ENCODE measurements at regions of chr4 and their contacts with region 1.

Region 1: GRCh38 chr4:112381996-112382692 is 85.0 kb downstream of the ALPK1 start:
- DNase-seq: no peak
- H3K4me3 ChIP-seq: no peak overlapping the region
- H3K27ac ChIP-seq: no peak overlapping the region
- H3K4me1 ChIP-seq: no peaks in the 10 kb centered on the region
- H3K27me3 ChIP-seq: no peaks in the 10 kb centered on the region
- CTCF ChIP-seq: no peak
- EP300 ChIP-seq: no peak
- POLR2A ChIP-seq: no peak

Region 2: GRCh38 chr4:112266821-112267220 is 115.3 kb before region 1 on chr4:
- in situ Hi-C with region 1: no loop called
- intact Hi-C with region 1: no loop called
- DNase-seq: no peak
- H3K4me3 ChIP-seq: no peak overlapping the region
- H3K27ac ChIP-seq: no peak overlapping the region
- H3K4me1 ChIP-seq: no peaks in the 10 kb centered on the region
- H3K27me3 ChIP-seq: no peaks in the 10 kb centered on the region
- CTCF ChIP-seq: peak in 4 of 5 experiments; percentile 26 to 38 (median 33)
- EP300 ChIP-seq: no peak
- POLR2A ChIP-seq: no peak

Region 3: GRCh38 chr4:112343330-112344080 is 38.6 kb before region 1 on chr4:
- in situ Hi-C with region 1: no loop called
- intact Hi-C with region 1: loop called (anchors 1 kb)
- DNase-seq: no peak
- H3K4me3 ChIP-seq: no peak overlapping the region
- H3K27ac ChIP-seq: no peak overlapping the region
- H3K4me1 ChIP-seq: no peaks in the 10 kb centered on the region
- H3K27me3 ChIP-seq: no peaks in the 10 kb centered on the region
- CTCF ChIP-seq: no peak
- EP300 ChIP-seq: no peak
- POLR2A ChIP-seq: no peak

Measured in transverse colon (tissue), 4 donors.